Dorsolateral prefrontal cortex (tissue), 120 donors: ENCODE measurements at regions of chr9 and their contacts with region 1.

Region 1: GRCh38 chr9:136790927-136791641 is at the start of gene TMEM141:
- DNase-seq: peak; percentile 99 to 100 (median 100)
- H3K4me3 ChIP-seq: peak within 1 kb of the TSS; percentile 54 to 95 (median 85)
- H3K27ac ChIP-seq: peak within 1 kb of the TSS; percentile 74 to 99 (median 95)
- H3K27me3 ChIP-seq: no peaks in the 10 kb centered on the region
- CTCF ChIP-seq: peak in 3 of 56 donors; percentile 8 to 23 (median 18)
- total RNA-seq, gene TMEM141: 37.4 to 81.9 (median 55.2) TPM

Region 2: DNA sequence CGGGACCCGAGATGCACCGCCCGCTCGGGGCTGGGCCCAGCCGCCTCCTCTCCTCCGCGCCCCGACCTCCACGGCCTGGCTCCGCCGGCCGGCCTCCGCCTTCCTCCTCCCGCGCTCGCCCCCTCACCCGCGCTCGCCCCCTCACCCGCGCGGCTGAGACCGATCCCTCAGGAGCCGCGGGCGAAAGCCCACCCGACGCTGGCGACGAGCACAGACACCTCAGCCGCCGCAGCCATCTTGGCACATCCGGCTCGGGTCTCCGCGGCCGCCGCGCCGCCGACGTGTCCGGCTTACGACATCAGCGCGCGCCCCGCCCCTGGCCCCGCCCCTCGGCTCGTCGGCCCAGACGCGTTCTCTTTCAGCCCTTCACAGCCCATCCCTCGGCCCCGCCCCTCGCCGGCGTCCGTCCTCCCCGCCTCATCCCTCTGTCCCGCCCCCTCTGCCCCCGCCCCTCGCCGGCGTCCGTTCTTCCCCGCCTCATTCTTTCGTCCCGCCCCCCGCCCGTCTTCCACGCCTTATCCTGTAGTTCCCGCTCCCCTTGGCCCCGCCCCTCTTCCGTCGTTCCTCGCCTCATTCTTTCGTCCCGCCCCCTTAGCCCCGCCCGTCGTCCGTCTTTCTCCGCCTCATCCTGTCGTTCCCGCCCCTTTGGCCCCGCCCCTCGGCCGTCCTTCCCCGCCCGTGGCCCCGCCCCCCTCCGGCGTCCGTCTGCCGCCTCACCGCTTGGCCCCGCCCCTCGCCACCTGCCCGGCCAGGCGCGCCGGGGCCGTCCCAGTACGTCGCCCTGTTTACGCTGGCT is 308.1 kb before region 1 on chr9 and contains the start of gene SEC16A:
- intact Hi-C with region 1: no loop called
- DNase-seq: peak; percentile 98 to 100 (median 99)
- H3K4me3 ChIP-seq: peak within 1 kb of the TSS; percentile 72 to 100 (median 92)
- H3K27ac ChIP-seq: peak within 1 kb of the TSS; percentile 91 to 100 (median 99)
- H3K27me3 ChIP-seq: no peaks in the 10 kb centered on the region
- CTCF ChIP-seq: peak in 15 of 56 donors; percentile 11 to 42 (median 22)
- total RNA-seq, gene SEC16A: 52.6 to 89.0 (median 68.2) TPM

Region 3: DNA sequence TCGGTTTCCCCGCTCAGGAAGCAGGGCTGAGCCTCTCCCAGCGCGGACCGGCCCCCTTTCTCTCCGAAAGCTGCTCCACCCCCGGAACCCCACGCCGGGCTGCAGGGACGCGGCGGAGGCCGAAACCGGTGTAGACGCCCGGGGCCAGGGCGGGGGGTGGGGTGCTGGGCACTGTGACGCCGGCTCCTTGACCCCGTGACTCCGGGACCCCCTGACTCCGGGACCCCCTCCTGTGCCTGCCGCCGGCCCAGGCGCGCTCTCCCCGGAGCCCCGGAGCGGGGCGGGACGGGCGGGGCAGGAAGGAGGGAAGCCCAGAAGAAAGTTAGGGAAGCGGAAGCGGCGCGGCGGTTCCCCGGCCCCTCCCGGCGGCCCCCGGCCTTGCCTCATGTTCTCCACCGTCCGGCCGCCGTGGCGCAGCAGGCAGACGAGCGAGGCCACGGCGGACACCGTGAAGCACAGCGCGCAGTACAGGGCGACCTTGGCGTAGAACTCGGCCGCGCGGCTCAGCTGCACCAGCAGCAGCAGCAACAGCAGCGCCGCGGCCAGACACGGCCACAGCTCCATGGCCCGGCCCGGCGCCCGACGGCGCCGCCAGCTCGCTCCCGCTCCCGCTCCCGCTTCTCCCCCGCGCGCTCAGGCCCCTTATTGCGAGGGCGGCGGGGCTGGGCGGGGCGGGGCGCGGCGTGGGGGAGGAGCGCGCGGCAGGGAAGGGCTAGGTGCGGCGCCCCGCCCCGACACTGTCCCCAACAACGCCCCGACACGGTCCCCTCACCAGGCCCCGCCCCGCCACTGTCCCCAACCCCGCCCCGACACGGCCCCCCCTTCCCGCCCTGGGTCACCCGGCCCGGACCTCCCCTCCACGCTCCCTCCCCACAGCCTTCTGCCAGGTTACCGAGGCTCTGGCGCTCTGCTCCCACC is 104.0 kb before region 1 on chr9 and contains the start of gene AGPAT2:
- intact Hi-C with region 1: no loop called
- DNase-seq: peak in 2 of 10 donors; percentile 37 to 62
- H3K4me3 ChIP-seq: peak within 1 kb of the TSS; percentile 36 to 79 (median 68)
- H3K27ac ChIP-seq: peak within 1 kb of the TSS in 42 of 59 donors; percentile 7 to 86 (median 52)
- H3K27me3 ChIP-seq: peaks cover 0 to 36% (median 0%) of the 10 kb centered on the region in 45 donors
- CTCF ChIP-seq: no peak
- total RNA-seq, gene AGPAT2: 4.1 to 18.0 (median 11.6) TPM

Region 4: DNA sequence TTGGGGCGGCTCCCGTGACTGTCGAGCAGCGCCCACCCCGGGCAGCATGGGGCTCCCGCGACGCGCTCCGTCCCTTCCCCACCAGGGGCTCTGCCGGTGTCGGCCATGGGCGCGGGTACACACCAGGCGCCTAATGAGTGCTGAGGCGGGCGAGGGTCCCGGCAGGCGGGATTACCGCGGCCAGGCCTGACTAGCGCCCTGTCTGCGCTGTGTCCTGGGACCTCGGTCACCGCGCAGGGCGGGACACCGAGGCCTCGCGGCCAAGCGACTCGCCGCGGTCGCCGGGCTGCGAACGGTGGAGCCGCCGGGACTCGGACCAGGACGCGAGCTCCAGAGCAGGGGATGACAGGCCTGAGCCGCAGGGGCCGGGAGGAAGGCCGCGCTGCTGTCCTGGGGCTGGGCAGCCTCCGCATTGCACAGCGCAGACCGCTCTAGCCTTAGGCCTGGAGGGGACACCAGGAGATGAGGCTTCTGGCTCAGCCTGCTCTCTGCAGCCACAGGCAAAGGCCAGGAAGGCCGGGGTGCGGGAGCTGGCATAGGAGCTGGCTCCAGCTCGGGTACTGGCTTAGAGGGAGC is 62.4 kb before region 1 on chr9:
- intact Hi-C with region 1: no loop called
- DNase-seq: peak in 3 of 10 donors; percentile 40 to 66 (median 47)
- H3K4me3 ChIP-seq: peak overlapping the region; percentile 63 to 100 (median 89)
- H3K27ac ChIP-seq: peak overlapping the region in 54 of 59 donors; percentile 1 to 93 (median 70)
- H3K27me3 ChIP-seq: no peaks in the 10 kb centered on the region
- CTCF ChIP-seq: no peak

Region 5: DNA sequence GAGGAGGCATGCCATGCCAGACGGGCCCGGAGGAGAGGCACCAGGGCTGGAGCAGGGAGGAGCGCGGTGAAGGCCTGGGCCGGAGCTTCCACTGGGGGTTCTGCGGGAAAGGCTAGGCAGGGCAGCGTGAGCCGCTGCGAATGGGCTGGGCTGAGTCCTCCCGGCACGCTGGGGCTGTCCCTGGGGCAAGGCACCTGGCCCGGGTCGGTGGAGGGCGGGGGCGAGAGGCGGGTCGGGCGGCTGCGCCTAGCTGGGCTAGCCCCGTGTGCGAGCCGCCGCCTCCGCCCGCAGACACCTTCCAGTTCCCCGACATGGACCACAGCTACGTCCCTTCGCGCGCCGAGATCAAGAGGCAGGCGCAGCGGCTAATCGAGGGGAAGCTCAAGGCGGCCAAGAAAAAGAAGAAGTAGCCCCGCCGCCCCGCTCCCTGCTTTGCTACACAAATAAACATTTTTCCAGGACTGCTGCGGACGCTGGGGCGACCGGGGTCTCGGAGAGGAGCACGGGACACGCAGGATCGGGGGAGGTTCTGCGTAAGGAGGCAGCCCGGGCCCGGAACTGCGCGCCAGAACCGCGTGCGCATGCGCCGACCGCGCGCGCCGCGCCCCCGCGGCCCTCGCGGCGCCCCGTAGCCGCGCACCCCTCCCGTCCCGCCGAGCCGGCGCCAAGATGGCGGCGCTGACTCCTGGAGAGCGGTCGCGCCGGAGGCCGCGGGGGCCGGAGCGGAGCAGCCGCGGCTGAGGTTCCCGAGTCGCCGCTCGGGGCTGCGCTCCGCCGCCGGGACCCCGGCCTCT is 16.4 kb after region 1 on chr9 and contains the start of gene RABL6:
- intact Hi-C with region 1: loop called in 1 of 2 experiments (anchors 2 kb)
- DNase-seq: peak in 9 of 10 donors; percentile 43 to 87 (median 60)
- H3K4me3 ChIP-seq: peak within 1 kb of the TSS; percentile 66 to 99 (median 88)
- H3K27ac ChIP-seq: peak within 1 kb of the TSS; percentile 53 to 99 (median 92)
- H3K27me3 ChIP-seq: no peaks in the 10 kb centered on the region
- CTCF ChIP-seq: peak in 9 of 56 donors; percentile 7 to 41 (median 19)
- total RNA-seq, gene RABL6: 86.8 to 178 (median 121) TPM

Region 6: GRCh38 chr9:136840140-136840687 is 49.1 kb after region 1 on chr9:
- intact Hi-C with region 1: loop called (anchors 1 to 5 kb)
- DNase-seq: no peak
- H3K4me3 ChIP-seq: peak overlapping the region in 1 of 59 donors; percentile 69
- H3K27ac ChIP-seq: peak overlapping the region in 57 of 59 donors; percentile 56 to 99 (median 93)
- H3K27me3 ChIP-seq: no peaks in the 10 kb centered on the region
- CTCF ChIP-seq: no peak

Region 7: DNA sequence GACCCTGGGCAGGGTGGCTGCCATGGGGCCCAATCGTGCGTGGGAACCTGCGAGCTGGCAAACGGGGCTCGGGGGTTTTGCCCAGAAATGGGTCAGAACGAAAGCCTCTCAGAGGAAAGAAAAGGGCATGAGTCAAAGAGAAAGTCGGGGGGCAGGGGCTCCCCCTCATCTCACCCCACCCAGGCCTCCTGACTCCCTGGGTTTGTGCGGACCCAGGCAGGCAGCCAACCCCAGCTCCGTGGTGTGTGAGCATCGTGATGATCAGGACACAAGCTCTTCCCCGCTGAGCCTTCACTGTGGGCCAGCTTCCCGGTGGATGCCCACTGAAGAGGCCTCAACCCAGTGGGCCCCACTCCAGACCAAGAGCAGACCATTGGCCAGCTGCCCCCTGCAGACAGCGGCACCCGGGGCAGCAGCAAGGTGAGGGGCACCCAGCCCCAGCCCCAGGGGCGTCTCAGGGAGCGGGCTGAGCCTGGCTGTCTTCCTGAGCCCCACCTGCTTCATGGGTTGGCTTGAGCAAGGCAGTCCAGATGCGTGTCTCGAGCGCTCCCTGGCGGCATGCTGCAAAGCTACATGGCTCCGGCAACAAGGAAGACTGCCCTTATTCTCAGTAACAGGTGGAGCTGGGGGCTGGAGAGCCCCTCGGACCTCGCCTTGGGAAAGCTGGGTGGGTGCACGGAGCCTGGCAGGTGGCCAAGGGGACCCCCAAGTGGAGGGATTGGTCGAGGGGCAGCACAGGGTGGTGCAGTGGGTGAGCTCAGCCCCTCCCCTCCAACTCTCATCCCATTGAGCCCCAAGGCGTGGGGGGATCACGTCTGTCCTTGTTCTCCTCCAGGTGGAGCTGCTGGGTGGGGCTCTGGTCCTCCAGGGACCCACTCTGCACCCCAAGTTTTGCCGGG is 244.0 kb after region 1 on chr9:
- intact Hi-C with region 1: loop called (anchors 5 kb)
- DNase-seq: peak; percentile 80 to 91 (median 88)
- H3K4me3 ChIP-seq: peak overlapping the region in 40 of 59 donors; percentile 2 to 51 (median 20)
- H3K27ac ChIP-seq: peak overlapping the region in 58 of 59 donors; percentile 10 to 100 (median 82)
- H3K27me3 ChIP-seq: no peaks in the 10 kb centered on the region
- CTCF ChIP-seq: peak; percentile 72 to 99 (median 95)